Activated CD4-positive, alpha-beta T cell treated with anti-CD3 and anti-CD28 coated beads, Interleukin-2, amount 10 ng/mL, durations not matched to agents 24 days and 14 days (primary cell): ENCODE measurements at regions of chr1 and their contacts with region 1.

Region 1: DNA sequence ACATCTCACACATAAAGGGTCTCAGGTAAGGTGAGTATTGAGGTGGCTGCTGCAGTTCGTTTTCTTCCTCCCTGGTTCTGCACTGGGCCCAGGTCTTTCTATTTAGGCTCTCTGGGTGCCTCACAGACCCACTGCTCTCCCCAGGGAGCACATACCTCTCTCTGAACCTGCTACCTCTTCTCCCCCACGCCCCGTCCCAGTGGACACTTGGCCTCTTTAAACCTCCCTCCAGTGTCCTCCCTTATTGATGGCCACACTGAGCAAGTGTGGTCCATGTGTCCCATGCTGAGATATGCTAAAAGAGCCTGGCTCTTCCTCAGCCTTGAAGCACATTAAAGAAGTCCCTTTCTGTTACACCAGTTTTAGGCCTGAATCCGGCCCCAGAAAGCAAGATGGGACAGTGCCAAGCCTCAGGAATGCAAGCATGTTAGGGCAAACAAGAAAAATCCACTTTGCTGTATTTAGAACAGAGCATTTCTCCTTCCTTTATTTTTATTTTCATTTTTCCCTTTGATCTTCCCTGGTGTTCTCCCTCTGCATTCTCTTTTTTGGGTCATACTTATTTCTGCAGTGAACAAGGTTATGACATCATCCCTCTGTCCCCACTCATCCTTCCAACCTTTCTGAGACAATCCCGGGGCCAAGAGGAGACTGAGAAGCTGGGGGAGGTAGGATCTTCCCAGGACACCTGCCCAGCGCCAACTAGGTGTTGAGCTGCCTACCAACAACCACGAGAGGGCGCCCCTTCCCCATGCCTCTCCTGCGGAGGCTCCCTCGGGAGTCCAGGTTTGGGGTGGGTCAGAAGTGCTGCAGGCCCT is 5.0 kb upstream of the CHI3L2 start:
- DNase-seq: peak; percentile 94
- H3K4me3 Mint-ChIP-seq: peak overlapping the region; percentile 71
- H3K27ac Mint-ChIP-seq: peak overlapping the region; percentile 92
- H3K4me1 Mint-ChIP-seq: peaks cover 83% of the 10 kb centered on the region
- H3K27me3 Mint-ChIP-seq: no peaks in the 10 kb centered on the region

Region 2: DNA sequence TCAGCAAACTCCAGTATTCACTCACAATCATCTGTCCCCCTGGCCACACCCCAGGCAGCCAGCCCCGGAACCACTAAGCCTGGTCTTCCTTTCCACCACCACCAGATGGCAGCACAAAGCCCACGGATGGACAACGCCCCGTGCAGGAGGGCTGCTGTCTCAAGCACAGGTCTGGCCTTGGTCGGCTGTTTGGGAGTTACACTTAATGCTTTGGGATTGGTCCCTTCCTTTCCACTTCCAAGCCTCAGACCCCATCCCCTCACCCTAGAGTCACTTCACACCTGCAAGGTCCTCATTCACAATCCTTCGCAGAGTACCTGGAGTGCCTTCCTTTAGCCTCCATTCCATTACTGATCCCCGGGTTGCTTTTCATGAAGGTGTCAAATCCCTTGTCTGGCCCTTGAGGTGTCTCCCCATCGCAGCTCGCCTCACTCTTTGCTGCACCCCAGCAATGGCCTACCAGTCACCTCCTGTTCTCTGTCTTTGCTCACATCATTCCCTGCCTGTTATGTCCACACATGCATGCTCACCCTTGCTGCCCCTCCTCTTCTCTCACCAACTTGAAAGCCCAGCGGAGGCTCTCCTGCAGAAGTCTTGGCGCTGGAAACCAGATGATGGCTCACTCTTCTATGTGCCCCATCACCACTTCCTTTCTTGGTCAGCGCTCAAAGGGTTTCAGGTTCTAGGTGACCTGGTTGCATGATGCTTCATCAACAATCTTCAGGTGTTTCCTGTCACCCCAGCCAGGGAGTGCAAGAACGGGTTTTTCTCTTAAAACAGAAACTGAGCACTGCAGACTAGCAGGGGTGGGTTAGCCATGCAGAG is 591.5 kb before region 1 on chr1:
- intact Hi-C with region 1: loop called (anchors 5 kb)
- DNase-seq: peak; percentile 96
- H3K4me3 Mint-ChIP-seq: no peak overlapping the region
- H3K27ac Mint-ChIP-seq: no peak overlapping the region
- H3K4me1 Mint-ChIP-seq: peaks cover 58% of the 10 kb centered on the region
- H3K27me3 Mint-ChIP-seq: no peaks in the 10 kb centered on the region

Region 3: GRCh38 chr1:110879758-110880606 is 342.5 kb before region 1 on chr1:
- intact Hi-C with region 1: loop called (anchors 1 kb)
- DNase-seq: peak; percentile 91
- H3K4me3 Mint-ChIP-seq: peak overlapping the region; percentile 84
- H3K27ac Mint-ChIP-seq: peak overlapping the region; percentile 99
- H3K4me1 Mint-ChIP-seq: peaks cover 65% of the 10 kb centered on the region
- H3K27me3 Mint-ChIP-seq: no peaks in the 10 kb centered on the region

Region 4: DNA sequence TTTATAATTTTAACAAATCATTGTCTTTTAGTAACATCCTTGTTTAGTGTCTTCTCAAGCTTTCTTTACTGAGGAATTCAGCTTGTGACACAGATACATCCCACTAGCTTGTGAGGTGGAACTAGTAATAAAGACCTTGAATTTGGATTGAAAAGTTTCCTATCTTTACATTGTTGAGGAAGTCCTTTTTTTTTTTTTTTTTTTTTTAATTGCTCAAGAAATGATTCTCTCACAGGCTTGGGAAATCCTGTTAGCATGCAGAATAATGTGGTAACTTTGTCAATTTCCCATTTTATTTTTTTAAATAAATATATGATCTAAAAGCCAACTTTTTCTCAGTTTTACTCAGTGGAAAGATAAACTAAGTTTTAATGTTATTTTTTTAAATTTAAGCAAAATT is 37.9 kb before region 1 on chr1:
- intact Hi-C with region 1: loop called (anchors 5 kb)
- DNase-seq: no peak
- H3K4me3 Mint-ChIP-seq: no peak overlapping the region
- H3K27ac Mint-ChIP-seq: no peak overlapping the region
- H3K4me1 Mint-ChIP-seq: peaks cover 37% of the 10 kb centered on the region
- H3K27me3 Mint-ChIP-seq: no peaks in the 10 kb centered on the region

Region 5: DNA sequence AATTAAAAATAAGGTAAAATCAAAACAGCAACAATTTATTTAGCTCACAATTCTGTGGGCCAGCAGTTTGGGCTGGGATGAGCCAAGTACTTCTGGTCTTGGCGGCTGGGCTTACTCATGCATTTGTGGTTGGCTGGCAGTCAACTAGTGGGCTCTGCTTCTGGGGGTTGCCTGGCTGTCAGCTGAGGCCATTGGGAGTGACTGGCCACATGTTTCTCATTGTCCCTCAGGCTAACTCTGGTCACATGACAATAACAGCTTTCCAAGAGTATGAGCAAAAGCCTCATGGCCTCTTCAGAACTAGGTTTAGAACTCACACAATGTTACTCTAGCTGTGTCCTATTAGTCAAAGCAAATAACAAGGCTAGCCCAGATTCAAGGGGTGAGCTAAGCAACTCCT is 52.6 kb after region 1 on chr1:
- intact Hi-C with region 1: loop called (anchors 2 kb)
- DNase-seq: peak; percentile 69
- H3K4me3 Mint-ChIP-seq: no peak overlapping the region
- H3K27ac Mint-ChIP-seq: peak overlapping the region; percentile 58
- H3K4me1 Mint-ChIP-seq: peaks cover 23% of the 10 kb centered on the region
- H3K27me3 Mint-ChIP-seq: peaks cover 25% of the 10 kb centered on the region

Region 6: DNA sequence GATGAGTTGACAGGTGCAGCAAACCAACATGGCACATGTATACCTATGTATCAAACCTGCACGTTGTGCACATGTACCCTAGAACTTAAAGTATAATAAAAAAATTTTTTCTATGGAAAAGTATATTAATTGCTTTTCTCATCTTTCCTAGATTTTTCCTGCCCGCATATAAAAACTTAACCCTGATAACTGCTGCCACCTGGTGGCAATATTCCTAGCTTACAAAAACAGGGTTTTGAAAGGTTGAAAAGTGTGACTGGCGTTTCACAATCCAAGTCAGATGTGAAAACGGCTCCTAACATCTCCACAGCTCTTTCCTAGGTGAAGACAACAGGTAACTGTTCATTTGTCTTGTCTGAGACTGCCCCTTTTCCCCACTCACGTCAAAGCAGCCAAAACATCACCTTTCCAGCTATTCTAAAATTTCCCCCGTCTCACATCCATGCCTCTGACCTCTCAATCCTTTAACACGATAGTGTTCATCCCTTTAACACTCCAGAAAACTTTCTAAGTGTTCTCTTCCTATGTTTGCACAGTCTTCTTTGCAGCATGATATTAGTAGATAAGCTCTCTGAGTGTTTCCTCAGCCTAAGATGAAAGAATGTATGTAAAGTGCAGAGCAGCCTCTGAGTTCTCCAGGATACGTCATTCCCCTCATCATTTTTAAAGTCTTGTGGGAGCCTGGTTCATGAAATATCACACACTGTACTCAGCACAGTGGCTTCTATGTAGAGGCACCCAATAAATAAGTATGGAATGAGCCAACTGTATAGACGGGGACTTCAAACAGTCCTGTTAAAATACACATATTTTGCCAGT is 177.5 kb after region 1 on chr1:
- intact Hi-C with region 1: loop called (anchors 1 kb)
- DNase-seq: peak; percentile 83
- H3K4me3 Mint-ChIP-seq: no peak overlapping the region
- H3K27ac Mint-ChIP-seq: no peak overlapping the region
- H3K4me1 Mint-ChIP-seq: peaks cover 11% of the 10 kb centered on the region
- H3K27me3 Mint-ChIP-seq: peaks cover 38% of the 10 kb centered on the region

Region 7: DNA sequence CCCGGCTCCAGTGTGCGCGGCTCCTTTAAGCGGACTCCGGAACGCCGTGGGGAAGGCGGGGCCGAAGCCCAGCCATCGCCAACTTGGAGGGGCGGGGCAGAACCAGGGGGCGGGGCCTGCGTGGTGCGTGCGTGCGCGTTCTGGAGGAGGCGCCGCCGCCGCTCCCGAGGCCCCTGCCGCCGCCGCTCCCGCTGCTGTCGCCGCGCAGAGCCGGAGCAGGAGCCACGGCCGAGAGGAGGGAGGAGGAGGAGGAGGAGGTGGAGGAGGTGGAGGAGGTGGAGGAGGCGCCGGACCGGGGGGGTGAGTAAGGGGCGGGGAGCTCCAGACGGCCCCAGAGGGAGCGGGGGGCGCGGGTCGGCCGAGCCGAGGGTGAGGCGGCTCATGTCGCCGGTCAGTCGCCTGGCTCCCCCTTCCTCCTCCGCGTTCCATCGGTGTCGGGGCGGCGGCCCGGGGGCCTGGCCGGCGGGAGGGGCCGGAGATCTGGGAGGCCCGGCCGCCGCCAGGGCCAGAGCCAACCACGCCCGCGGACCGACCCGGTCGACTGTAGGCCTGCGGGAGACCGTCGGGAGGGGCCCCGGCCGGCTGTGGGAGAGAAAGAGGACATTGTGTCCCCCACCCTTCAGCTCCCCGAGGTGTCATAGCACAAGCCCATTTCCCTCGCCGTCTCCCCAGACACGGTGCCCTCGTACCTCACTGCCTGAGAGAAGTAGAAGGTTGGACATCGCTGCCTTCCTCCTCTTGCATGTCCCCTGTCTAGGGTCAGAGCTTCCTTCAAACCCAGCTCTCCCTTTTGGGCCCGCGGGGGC is 397.3 kb after region 1 on chr1 and contains the start of gene RAP1A:
- intact Hi-C with region 1: loop called (anchors 5 kb)
- DNase-seq: peak; percentile 97
- H3K4me3 Mint-ChIP-seq: peak within 1 kb of the TSS; percentile 99
- H3K27ac Mint-ChIP-seq: peak within 1 kb of the TSS; percentile 93
- H3K4me1 Mint-ChIP-seq: peaks cover 66% of the 10 kb centered on the region
- H3K27me3 Mint-ChIP-seq: no peaks in the 10 kb centered on the region
- total RNA-seq, gene RAP1A: 306 and 307 TPM in 2 replicates